GM23248 (cell line): ENCODE measurements at regions of chr11 and their contacts with region 1.

Region 1: GRCh38 chr11:92954003-92954402 is 15.4 kb upstream of the MTNR1B start:
- DNase-seq: no peak
- H3K4me3 ChIP-seq: no peak overlapping the region
- H3K27ac ChIP-seq: no peak overlapping the region
- H3K4me1 ChIP-seq: no peaks in the 10 kb centered on the region
- H3K27me3 ChIP-seq: peaks cover 29% of the 10 kb centered on the region

Region 2: GRCh38 chr11:93213622-93214021 is 259.6 kb after region 1 on chr11:
- in situ Hi-C with region 1: loop called (anchors 5 kb)
- DNase-seq: no peak
- H3K4me3 ChIP-seq: no peak overlapping the region
- H3K27ac ChIP-seq: no peak overlapping the region
- H3K4me1 ChIP-seq: no peaks in the 10 kb centered on the region
- H3K27me3 ChIP-seq: no peaks in the 10 kb centered on the region

Region 3: DNA sequence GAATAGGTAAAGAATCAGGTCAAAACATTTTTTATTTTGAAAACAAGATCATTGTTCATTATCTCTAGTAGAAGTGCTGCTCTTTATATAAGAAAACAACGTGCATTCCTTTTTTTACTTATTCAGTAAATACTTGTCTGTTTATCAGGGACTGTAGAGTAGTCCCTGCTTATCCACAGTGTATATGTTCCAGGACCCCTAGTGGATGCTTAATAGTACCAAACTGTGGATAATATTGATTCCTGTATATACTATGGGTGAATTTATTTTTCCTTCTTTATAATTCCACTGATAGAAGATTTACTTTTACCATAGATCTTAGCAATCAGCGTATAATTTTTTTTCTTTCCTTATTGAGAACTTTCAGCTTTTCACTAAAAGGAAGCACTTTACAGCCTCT is 740.1 kb after region 1 on chr11:
- in situ Hi-C with region 1: no loop called
- DNase-seq: no peak
- H3K4me3 ChIP-seq: no peak overlapping the region
- H3K27ac ChIP-seq: no peak overlapping the region
- H3K4me1 ChIP-seq: no peaks in the 10 kb centered on the region
- H3K27me3 ChIP-seq: no peaks in the 10 kb centered on the region